ENCODE measurements at regions of chr20 and their contacts with region 1.

Region 1: GRCh38 chr20:64062596-64063388 is at the start of gene TCEA2:
- DNase-seq: peak; percentile 94
- H3K4me3 Mint-ChIP-seq: peak within 1 kb of the TSS; percentile 93
- H3K27ac Mint-ChIP-seq: peak within 1 kb of the TSS; percentile 95
- H3K4me1 Mint-ChIP-seq: peaks cover 56% of the 10 kb centered on the region
- H3K27me3 Mint-ChIP-seq: no peaks in the 10 kb centered on the region
- total RNA-seq, gene TCEA2: 33.8 TPM in 2 replicates

Region 2: DNA sequence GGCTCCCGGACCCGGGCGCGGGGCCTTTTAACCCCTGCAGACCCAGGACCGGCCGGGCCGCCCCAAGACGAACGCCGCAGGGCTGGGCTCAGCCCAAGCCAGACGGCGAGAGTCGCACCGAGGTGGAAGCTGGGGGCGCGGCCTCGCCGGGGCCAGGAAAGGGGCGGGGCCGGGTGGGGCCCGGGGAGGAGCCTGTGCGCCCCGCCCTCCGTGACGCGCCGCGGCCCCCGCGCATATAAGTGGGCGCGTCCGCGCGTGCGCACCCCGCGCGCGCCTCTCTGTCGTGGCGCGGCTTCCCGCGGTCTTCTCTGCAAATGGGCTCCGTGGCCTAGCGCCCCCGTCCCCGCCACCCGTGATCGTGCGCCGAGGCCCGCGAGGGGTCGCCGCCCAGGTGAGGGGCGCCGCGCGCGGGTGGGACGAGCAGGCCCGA is 542.3 kb before region 1 on chr20 and contains the start of gene PPDPF:
- intact Hi-C with region 1: loop called (anchors 1 kb)
- DNase-seq: peak; percentile 81
- H3K4me3 Mint-ChIP-seq: peak within 1 kb of the TSS; percentile 84
- H3K27ac Mint-ChIP-seq: peak within 1 kb of the TSS; percentile 70
- H3K4me1 Mint-ChIP-seq: no peaks in the 10 kb centered on the region
- H3K27me3 Mint-ChIP-seq: peaks cover 4% of the 10 kb centered on the region
- total RNA-seq, gene PPDPF: 117 and 122 TPM in 2 replicates

Region 3: DNA sequence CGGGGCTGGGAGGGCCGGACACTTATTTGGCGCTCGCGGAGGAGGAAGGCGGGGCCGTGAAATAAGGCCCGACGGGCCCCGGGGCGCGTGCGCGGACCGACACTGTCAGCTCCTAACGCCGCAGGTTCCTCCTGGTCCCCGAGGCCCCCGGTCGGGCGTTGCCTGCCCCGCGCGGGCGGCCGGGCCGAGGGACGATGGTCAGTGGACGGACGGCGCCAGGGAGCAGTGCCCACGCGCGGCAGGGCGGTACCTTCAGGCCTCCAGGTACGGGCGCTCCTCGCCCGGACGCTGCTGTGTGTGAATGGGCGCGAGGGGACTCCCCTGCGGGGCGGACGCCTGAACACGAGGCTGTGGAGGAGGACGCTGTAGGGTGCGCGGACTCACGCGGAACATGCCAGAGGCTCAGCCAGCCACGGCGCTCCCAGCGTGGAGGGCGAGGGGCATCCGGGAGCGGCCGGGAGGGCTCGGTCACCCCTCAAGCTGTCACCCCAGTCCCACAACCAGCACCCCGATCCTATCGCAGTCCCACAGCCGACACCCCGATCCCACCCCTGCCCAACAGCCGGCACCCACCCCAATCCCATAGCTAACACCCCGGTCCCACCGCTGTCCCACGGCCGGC is 435.6 kb before region 1 on chr20:
- intact Hi-C with region 1: loop called (anchors 2 kb)
- DNase-seq: peak; percentile 95
- H3K4me3 Mint-ChIP-seq: peak overlapping the region; percentile 100
- H3K27ac Mint-ChIP-seq: peak overlapping the region; percentile 98
- H3K4me1 Mint-ChIP-seq: peaks cover 23% of the 10 kb centered on the region
- H3K27me3 Mint-ChIP-seq: no peaks in the 10 kb centered on the region

Region 4: GRCh38 chr20:63894358-63895201 is 168.2 kb before region 1 on chr20 and contains the start of gene DNAJC5:
- intact Hi-C with region 1: loop called (anchors 1 kb)
- DNase-seq: peak; percentile 98
- H3K4me3 Mint-ChIP-seq: peak within 1 kb of the TSS; percentile 89
- H3K27ac Mint-ChIP-seq: peak within 1 kb of the TSS; percentile 96
- H3K4me1 Mint-ChIP-seq: peaks cover 42% of the 10 kb centered on the region
- H3K27me3 Mint-ChIP-seq: no peaks in the 10 kb centered on the region
- total RNA-seq, gene DNAJC5: 47.5 and 48.2 TPM in 2 replicates

Region 5: DNA sequence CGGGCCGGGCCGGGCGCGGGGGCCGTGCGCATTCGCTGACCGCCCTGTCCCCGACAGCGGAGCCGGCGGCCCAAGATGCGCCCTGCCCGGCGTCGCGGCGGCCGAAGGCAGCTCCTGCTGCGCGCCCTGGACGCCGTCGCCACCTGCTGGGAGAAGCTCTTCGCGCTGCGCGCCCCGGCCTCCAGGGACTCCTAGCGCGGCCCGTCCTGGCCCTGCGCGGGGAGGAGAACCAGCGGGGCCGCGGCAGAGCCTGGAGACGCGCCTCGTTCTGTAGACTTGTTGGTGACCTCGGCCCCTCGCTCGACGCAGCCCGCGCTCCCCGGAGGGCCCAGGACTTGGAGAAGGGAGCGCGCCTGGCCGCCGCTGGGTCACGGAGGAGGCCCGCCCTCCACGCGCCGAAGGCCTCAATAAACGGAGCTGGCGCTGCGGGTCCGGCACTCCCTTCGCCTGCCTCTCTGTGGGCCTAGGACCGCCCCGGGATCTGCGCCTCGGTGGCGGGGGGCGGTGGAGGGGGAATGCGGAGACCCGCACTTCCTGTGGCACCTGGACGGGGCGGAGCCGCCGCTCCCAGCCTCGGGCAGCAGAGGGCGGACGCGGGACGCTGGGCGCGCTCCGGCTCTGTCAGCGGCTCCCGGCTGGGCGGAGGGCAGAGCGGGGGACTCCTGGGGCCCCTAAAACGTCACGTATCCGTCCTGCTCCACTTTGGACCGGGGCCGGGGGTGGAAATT is 24.1 kb before region 1 on chr20:
- intact Hi-C with region 1: loop called (anchors 1 kb)
- DNase-seq: peak; percentile 77
- H3K4me3 Mint-ChIP-seq: peak overlapping the region; percentile 73
- H3K27ac Mint-ChIP-seq: no peak overlapping the region
- H3K4me1 Mint-ChIP-seq: peaks cover 51% of the 10 kb centered on the region
- H3K27me3 Mint-ChIP-seq: peaks cover 3% of the 10 kb centered on the region